ENCODE measurements at regions of chr2 and their contacts with region 1.

Region 1: GRCh38 chr2:219119422-219120043 is 41.1 kb downstream of the NHEJ1 start:
- DNase-seq: peak in 8 of 9 experiments; percentile 34 to 70 (median 63)
- ATAC-seq: no peak
- H3K4me3 ChIP-seq: no peak overlapping the region
- H3K4me3 Mint-ChIP-seq: no peak overlapping the region
- H3K27ac ChIP-seq: no peak overlapping the region
- H3K27ac Mint-ChIP-seq: no peak overlapping the region
- H3K4me1 ChIP-seq: peaks cover 6% of the 10 kb centered on the region
- H3K4me1 Mint-ChIP-seq: peaks cover 8% of the 10 kb centered on the region
- H3K27me3 ChIP-seq: no peaks in the 10 kb centered on the region
- H3K27me3 Mint-ChIP-seq: no peaks in the 10 kb centered on the region
- CTCF ChIP-seq: peak; percentile 80

Region 2: GRCh38 chr2:218995972-218996711 is 123.4 kb before region 1 on chr2:
- CTCF ChIA-PET with region 1: interaction called, 10 read pairs
- POLR2A ChIA-PET with region 1: no interaction called
- intact Hi-C with region 1: loop called in 1 of 2 experiments (anchors 1 kb)
- DNase-seq: peak; percentile 58 to 83 (median 78)
- ATAC-seq: peak; percentile 80
- H3K4me3 ChIP-seq: peak overlapping the region in 1 of 2 experiments; percentile 34
- H3K4me3 Mint-ChIP-seq: peak overlapping the region; percentile 22
- H3K27ac ChIP-seq: no peak overlapping the region
- H3K27ac Mint-ChIP-seq: no peak overlapping the region
- H3K4me1 ChIP-seq: peaks cover 17% of the 10 kb centered on the region
- H3K4me1 Mint-ChIP-seq: peaks cover 9% of the 10 kb centered on the region
- H3K27me3 ChIP-seq: peaks cover 29 to 39% of the 10 kb centered on the region in 2 experiments
- H3K27me3 Mint-ChIP-seq: peaks cover 67% of the 10 kb centered on the region
- CTCF ChIP-seq: peak; percentile 75

Region 3: DNA sequence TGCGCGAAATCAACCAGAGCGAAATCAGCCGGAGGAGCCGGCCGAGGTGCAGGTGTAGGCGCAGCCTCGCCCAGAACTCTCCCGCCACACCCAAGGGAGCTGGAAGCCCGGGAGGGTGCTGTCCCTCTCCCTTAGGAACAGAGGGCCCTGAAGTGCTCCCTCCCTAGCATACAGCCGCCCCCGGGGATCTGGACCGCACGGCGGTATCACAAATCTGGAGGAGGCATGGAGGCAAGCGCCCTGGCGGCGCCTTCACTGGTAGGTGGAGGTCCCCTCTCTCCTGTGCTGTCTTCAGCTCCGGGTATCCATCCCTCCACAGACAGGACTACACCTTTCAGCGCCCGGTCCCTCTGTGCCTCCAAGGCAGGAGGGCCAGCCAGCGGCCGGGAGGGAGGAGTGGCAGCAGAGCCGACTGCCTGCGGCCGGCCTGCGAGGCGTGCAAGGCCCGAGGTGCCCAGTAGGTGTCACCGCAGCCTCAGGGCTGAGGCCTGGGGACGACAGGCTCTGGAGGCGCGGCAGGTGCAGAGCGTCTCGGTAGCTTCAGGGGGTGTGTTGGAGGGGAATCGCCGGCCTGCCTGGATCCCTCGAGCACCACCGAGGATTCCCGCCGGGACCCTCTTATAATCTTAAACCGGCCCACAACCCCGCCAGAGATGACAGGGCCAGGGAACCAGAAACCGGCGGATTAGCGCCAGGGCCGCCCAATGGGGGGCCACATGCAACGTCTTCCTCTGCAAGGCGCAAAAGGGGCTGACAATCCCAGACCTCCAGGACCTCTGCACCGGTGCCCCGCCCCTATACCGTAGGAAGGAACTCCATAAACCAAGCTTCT is 61.6 kb before region 1 on chr2:
- CTCF ChIA-PET with region 1: interaction called, 95 read pairs
- POLR2A ChIA-PET with region 1: no interaction called
- intact Hi-C with region 1: loop called (anchors 1 kb)
- DNase-seq: peak; percentile 62 to 85 (median 74)
- ATAC-seq: peak; percentile 96
- H3K4me3 ChIP-seq: no peak overlapping the region
- H3K4me3 Mint-ChIP-seq: peak overlapping the region; percentile 55
- H3K27ac ChIP-seq: no peak overlapping the region
- H3K27ac Mint-ChIP-seq: no peak overlapping the region
- H3K4me1 ChIP-seq: peaks cover 35% of the 10 kb centered on the region
- H3K4me1 Mint-ChIP-seq: peaks cover 26% of the 10 kb centered on the region
- H3K27me3 ChIP-seq: peaks cover 26 to 37% of the 10 kb centered on the region in 2 experiments
- H3K27me3 Mint-ChIP-seq: peaks cover 58% of the 10 kb centered on the region
- CTCF ChIP-seq: peak; percentile 92

Region 4: GRCh38 chr2:219065484-219065883 is 54.0 kb before region 1 on chr2:
- CTCF ChIA-PET with region 1: interaction called, 95 read pairs
- POLR2A ChIA-PET with region 1: interaction called, 3 read pairs
- intact Hi-C with region 1: no loop called
- DNase-seq: no peak
- ATAC-seq: no peak
- H3K4me3 ChIP-seq: no peak overlapping the region
- H3K4me3 Mint-ChIP-seq: no peak overlapping the region
- H3K27ac ChIP-seq: no peak overlapping the region
- H3K27ac Mint-ChIP-seq: no peak overlapping the region
- H3K4me1 ChIP-seq: peaks cover 6% of the 10 kb centered on the region
- H3K4me1 Mint-ChIP-seq: peaks cover 6% of the 10 kb centered on the region
- H3K27me3 ChIP-seq: peaks cover 2 to 11% of the 10 kb centered on the region in 2 experiments
- H3K27me3 Mint-ChIP-seq: peaks cover 28% of the 10 kb centered on the region
- CTCF ChIP-seq: no peak

Region 5: GRCh38 chr2:219104107-219105035 is 15.2 kb before region 1 on chr2:
- CTCF ChIA-PET with region 1: interaction called, 10 read pairs
- POLR2A ChIA-PET with region 1: no interaction called
- intact Hi-C with region 1: no loop called
- DNase-seq: peak in 2 of 9 experiments; percentile 43 to 60
- ATAC-seq: peak; percentile 78
- H3K4me3 ChIP-seq: no peak overlapping the region
- H3K4me3 Mint-ChIP-seq: no peak overlapping the region
- H3K27ac ChIP-seq: no peak overlapping the region
- H3K27ac Mint-ChIP-seq: no peak overlapping the region
- H3K4me1 ChIP-seq: peaks cover 7% of the 10 kb centered on the region
- H3K4me1 Mint-ChIP-seq: peaks cover 28% of the 10 kb centered on the region
- H3K27me3 ChIP-seq: no peaks in the 10 kb centered on the region
- H3K27me3 Mint-ChIP-seq: no peaks in the 10 kb centered on the region
- CTCF ChIP-seq: peak; percentile 70

Region 6: DNA sequence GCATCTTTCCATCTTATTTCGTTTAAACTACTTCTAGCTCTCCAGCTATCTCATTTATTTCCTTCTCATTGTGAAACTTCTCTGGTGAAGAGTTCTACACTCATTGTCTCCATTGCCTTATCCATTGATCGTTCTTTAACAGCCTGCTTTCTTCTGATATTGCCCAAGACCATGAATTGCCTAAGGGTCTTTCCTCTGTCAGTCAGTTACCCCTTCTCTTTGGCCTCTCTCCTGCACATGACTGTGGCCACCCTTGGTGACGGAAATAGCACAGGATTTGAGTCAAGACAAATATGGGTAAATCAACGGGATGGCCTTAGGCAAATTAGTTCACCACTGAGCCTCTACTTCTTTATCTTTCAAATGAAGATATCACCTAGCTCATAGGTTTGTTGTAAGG is 14.4 kb after region 1 on chr2:
- CTCF ChIA-PET with region 1: interaction called, 15 read pairs
- POLR2A ChIA-PET with region 1: interaction called, 4 read pairs
- intact Hi-C with region 1: no loop called
- DNase-seq: no peak
- ATAC-seq: no peak
- H3K4me3 ChIP-seq: no peak overlapping the region
- H3K4me3 Mint-ChIP-seq: no peak overlapping the region
- H3K27ac ChIP-seq: no peak overlapping the region
- H3K27ac Mint-ChIP-seq: no peak overlapping the region
- H3K4me1 ChIP-seq: no peaks in the 10 kb centered on the region
- H3K4me1 Mint-ChIP-seq: no peaks in the 10 kb centered on the region
- H3K27me3 ChIP-seq: no peaks in the 10 kb centered on the region
- H3K27me3 Mint-ChIP-seq: no peaks in the 10 kb centered on the region
- CTCF ChIP-seq: no peak

Measured in CD8-positive, alpha-beta T cell (primary cell).